ENCODE measurements at regions of chr1 and their contacts with region 1.

Region 1: GRCh38 chr1:56584910-56585528 is 5.7 kb upstream of the PLPP3 start:
- DNase-seq: no peak
- ATAC-seq: peak; percentile 57 to 88 (median 74)
- H3K4me3 ChIP-seq: no peak overlapping the region
- H3K27ac ChIP-seq: no peak overlapping the region
- H3K4me1 ChIP-seq: peaks cover 7% of the 10 kb centered on the region
- H3K27me3 ChIP-seq: no peaks in the 10 kb centered on the region
- CTCF ChIP-seq: peak; percentile 87

Region 2: DNA sequence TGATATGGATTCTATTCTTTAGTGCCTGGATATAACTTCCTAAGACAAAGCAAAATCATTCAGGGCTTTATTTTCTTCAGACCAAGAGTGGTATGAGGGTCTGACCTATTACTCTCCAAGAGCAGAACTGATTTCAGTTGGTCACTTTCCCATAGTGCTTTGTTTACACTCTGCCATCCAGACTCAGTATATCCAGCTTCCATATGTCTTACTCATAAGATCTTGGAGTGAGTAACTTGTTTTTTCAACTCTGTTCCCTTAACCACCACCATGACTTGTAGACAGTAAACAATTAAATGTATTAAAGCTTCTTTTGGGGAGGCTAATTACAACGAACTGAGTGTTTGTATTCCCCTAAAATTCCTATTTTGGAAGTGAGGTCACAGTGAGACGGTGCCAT is 1453.2 kb before region 1 on chr1:
- intact Hi-C with region 1: loop called in 1 of 2 experiments (anchors 10 kb)
- DNase-seq: no peak
- ATAC-seq: no peak
- H3K4me3 ChIP-seq: no peak overlapping the region
- H3K27ac ChIP-seq: no peak overlapping the region
- H3K4me1 ChIP-seq: no peaks in the 10 kb centered on the region
- H3K27me3 ChIP-seq: no peaks in the 10 kb centered on the region
- CTCF ChIP-seq: no peak

Region 3: GRCh38 chr1:55375617-55376258 is 1209.3 kb before region 1 on chr1:
- intact Hi-C with region 1: loop called (anchors 2 kb)
- DNase-seq: no peak
- ATAC-seq: peak; percentile 59 to 72 (median 68)
- H3K4me3 ChIP-seq: no peak overlapping the region
- H3K27ac ChIP-seq: no peak overlapping the region
- H3K4me1 ChIP-seq: no peaks in the 10 kb centered on the region
- H3K27me3 ChIP-seq: no peaks in the 10 kb centered on the region
- CTCF ChIP-seq: peak; percentile 92